Activated CD4-positive, alpha-beta T cell treated with anti-CD3 and anti-CD28 coated beads, Interleukin-2, amount 10 ng/mL, durations not matched to agents 24 days and 14 days (primary cell): ENCODE measurements at regions of chr14 and their contacts with region 1.

Region 1: GRCh38 chr14:90274808-90275457 is 18.6 kb downstream of the PSMC1 start:
- DNase-seq: peak; percentile 67
- H3K4me3 Mint-ChIP-seq: peak overlapping the region; percentile 50
- H3K27ac Mint-ChIP-seq: peak overlapping the region; percentile 90
- H3K4me1 Mint-ChIP-seq: peaks cover 16% of the 10 kb centered on the region
- H3K27me3 Mint-ChIP-seq: no peaks in the 10 kb centered on the region

Region 2: DNA sequence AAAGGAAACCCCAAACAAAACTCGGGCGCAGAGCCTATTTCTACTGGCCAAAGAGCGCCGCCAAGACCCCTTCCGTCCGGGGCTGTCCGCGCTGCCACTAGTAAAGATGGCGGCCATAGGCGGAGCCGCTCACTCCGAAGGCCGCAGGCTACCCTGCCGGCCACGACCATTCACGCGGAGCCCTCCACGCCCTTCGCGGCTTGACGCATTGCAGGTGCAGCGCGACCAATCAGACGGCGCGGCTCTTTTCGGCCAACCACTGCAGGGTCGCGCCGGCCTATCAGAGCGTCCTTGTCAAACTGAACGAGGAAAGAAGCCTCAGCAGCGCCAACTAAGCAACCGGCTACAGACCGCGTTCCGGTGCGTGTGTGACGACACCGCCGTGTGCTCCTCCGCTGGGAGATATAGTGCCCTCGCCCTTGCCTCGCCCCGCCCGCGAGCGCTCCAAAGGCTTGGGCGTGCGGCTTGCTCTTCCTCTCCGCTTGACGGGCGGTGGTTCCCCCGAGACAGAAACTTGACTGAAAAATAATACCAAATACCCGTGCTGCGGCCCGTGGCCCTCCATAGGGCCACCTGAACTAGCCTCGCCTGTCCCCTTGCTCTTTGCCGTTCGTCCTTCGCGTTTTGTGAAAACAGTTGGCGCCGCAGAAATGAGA is 108.3 kb after region 1 on chr14:
- intact Hi-C with region 1: loop called (anchors 5 kb)
- DNase-seq: peak; percentile 99
- H3K4me3 Mint-ChIP-seq: no peak overlapping the region
- H3K27ac Mint-ChIP-seq: no peak overlapping the region
- H3K4me1 Mint-ChIP-seq: peaks cover 6% of the 10 kb centered on the region
- H3K27me3 Mint-ChIP-seq: no peaks in the 10 kb centered on the region